OCI-LY7 (cell line): ENCODE measurements at regions of chr16 and their contacts with region 1.

Region 1: DNA sequence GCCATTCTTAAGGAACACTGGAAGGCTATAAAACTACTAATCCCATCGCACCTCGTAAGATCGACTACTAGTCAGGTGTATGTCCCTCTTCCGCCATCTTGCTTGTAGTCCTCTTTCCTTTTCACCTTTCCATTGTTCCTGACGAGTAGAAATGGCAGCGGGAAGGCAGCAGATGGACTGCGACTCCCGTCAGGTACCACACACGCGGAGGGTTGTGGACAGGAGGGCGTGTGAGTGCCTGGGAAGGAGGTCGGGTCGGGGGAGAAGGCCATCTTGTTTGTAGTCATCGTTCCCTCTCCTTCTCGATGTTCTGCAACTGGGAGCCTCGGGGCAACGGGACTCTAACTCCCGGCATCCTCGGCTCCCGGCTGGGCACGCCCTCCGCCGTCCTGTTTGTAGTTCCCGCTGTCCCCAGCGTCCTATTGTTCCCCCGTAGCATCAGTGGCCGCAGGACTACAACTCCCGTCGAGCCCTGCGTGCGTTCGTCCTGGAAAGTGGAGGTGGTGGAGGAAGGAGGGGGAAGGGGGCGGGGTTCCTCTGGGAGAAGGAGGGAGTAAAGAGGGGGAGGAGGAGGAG is 324 bp upstream of the FBXL19 start:
- DNase-seq: peak; percentile 99
- H3K4me3 ChIP-seq: peak overlapping the region; percentile 74
- H3K27ac ChIP-seq: peak overlapping the region; percentile 74
- H3K4me1 ChIP-seq: peaks cover 16% of the 10 kb centered on the region
- CTCF ChIP-seq: no peak

Region 2: GRCh38 chr16:30761928-30762810 is 160.9 kb before region 1 on chr16 and contains the starts of genes CFAP119 and RNF40:
- CTCF ChIA-PET with region 1: no interaction called
- POLR2A ChIA-PET with region 1: no interaction called
- intact Hi-C with region 1: loop called (anchors 1 kb)
- DNase-seq: peak; percentile 93
- H3K4me3 ChIP-seq: peak within 1 kb of the TSS; percentile 84
- H3K27ac ChIP-seq: peak within 1 kb of the TSS; percentile 57
- H3K4me1 ChIP-seq: peaks cover 49% of the 10 kb centered on the region
- CTCF ChIP-seq: no peak
- total RNA-seq, gene CFAP119: 20.7 and 27.4 TPM in 2 replicates
- total RNA-seq, gene RNF40: 54.8 and 70.5 TPM in 2 replicates

Region 3: DNA sequence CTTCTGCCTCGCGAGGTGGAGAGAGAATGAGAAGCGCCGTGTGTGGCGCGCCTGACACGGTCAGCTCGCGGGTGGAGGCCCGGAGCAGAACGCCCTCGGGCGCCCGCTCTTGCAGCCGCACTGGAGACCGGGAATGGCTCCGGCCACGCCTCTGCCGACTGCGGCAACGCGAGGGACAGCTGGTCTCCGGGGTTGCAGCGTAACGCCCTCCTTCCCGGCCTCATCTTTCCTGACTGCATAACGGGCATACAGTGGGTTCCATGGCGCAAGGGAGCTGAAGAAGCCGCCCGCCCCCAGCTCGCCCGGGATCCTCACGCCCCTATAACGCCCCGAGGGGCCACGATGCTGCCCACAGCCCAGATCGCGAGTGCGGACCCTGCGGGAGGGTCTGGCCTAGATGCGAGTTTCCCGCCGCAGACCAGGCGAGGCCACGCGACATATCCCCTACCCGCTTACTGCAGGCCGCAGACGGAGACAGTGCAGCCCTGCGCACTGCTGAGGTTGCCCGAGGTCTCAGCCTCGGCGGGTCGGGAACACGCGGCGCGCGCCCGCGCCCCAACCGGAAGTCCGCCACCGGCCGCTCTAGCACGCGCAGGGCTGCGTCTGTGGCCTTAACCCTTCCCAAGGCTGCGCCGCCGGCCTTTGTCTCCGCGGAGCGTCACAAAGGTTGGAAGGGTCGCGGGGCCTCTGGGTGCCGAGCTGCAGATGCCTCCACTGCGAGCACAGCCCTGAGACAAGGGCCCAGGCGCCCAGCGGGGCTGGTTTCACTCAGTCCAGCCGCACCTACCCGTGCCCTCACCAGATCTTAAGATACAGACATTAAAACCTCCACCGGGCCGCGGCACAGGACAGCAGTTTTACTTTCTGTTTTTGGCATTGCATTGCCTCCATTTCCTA is 48.0 kb before region 1 on chr16:
- CTCF ChIA-PET with region 1: no interaction called
- POLR2A ChIA-PET with region 1: no interaction called
- intact Hi-C with region 1: loop called (anchors 1 kb)
- DNase-seq: peak; percentile 95
- H3K4me3 ChIP-seq: peak overlapping the region; percentile 89
- H3K27ac ChIP-seq: peak overlapping the region; percentile 78
- H3K4me1 ChIP-seq: peaks cover 34% of the 10 kb centered on the region
- CTCF ChIP-seq: 0 out of 2 replicates have a peak, but pooled peaks have one; percentile 27

Region 4: GRCh38 chr16:30997000-30997886 is 74.2 kb after region 1 on chr16:
- CTCF ChIA-PET with region 1: no interaction called
- POLR2A ChIA-PET with region 1: no interaction called
- intact Hi-C with region 1: loop called (anchors 2 kb)
- DNase-seq: peak; percentile 79
- H3K4me3 ChIP-seq: peak overlapping the region; percentile 72
- H3K27ac ChIP-seq: no peak overlapping the region
- H3K4me1 ChIP-seq: peaks cover 10% of the 10 kb centered on the region
- CTCF ChIP-seq: no peak